ENCODE measurements at regions of chr6 and their contacts with region 1.

Region 1: DNA sequence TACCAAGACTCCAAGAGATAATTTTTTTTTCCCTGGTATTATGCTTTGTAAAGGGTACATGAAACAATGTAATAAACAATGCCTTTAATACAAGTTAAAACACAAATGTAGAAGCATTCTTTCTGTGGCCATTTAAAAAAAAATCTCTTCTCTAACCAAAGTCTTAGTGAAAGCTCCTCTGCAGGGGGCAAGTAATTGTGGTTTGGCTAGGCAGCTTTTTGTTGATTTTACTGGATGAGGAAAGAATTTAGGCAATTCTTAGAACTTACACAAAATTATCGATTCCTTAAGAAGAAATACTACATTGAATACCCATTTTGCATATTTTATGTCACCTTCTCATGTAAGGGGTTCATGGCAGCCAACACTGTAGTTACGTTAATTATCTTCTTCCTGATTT is 12.4 kb downstream of the TFB1M start:
- DNase-seq: no peak
- H3K4me3 ChIP-seq: no peak overlapping the region
- H3K27ac ChIP-seq: no peak overlapping the region
- H3K4me1 ChIP-seq: no peaks in the 10 kb centered on the region
- CTCF ChIP-seq: no peak

Region 2: DNA sequence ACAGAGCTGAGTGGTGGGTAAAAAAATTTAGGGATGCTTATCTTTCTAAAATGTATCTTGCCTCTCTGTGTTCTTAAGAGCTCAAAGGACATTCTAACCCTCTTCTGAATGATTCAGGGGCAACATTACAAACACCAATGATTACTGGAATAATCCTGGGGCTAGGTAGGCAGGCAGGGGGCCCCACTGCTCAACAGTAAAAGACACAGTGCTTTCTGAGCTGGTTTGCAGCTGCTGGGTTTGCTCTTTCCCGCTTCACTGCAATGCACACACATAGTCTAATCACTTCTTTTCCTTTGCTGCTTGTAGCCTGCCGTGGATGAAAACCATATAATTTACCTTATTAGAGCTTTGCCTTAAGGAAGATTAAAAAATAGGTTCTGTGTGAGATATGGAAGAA is 14.1 kb before region 1 on chr6:
- CTCF ChIA-PET with region 1: no interaction called
- POLR2A ChIA-PET with region 1: interaction called, 18 read pairs
- intact Hi-C with region 1: no loop called
- DNase-seq: no peak
- H3K4me3 ChIP-seq: no peak overlapping the region
- H3K27ac ChIP-seq: no peak overlapping the region
- H3K4me1 ChIP-seq: no peaks in the 10 kb centered on the region
- CTCF ChIP-seq: no peak

Region 3: GRCh38 chr6:155530219-155530834 is 228.5 kb after region 1 on chr6:
- CTCF ChIA-PET with region 1: no interaction called
- POLR2A ChIA-PET with region 1: no interaction called
- intact Hi-C with region 1: no loop called
- DNase-seq: peak; percentile 66
- H3K4me3 ChIP-seq: no peak overlapping the region
- H3K27ac ChIP-seq: no peak overlapping the region
- H3K4me1 ChIP-seq: peaks cover 10% of the 10 kb centered on the region
- CTCF ChIP-seq: peak; percentile 97